ENCODE measurements at regions of chr19 and their contacts with region 1.

Region 1: DNA sequence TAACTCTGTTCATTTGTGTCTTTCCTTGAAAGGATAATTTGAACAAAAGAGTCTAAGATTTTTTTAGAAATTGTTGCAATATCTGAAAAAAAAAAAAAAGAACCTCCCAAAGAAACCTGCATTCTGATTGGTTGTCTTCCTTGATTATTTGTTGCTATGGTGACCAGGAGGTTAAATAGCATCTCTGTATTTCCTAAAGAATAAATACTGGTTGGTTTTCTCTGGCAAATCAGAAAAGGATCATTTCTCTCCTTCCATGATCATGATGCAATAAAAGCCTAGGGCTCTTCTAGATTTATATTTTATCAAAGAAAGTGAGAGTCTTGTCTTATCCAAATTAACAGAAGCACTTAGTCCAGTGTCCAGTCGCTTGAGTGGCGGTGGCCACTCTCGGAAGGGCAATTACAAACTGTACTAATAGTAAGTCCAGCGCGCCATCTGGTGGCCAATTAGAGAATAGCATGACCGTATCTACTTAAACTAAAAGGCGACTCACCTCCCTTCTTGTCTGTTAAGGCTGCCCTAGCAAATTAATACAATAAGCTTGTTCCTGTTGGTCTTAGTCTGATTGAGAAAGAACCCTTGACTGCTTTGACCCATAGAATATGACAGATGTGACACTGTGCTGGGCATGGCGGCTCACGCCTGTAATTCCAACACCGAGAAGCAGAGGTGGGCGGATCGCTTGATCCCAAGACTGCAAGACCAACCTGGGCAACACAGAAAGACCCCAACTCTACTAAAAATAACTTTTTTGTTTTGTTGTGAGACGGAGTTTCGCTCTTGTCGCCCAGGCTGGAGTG is 47.0 kb upstream of the PNMA8B start:
- DNase-seq: peak; percentile 76
- CTCF ChIP-seq: peak; percentile 78

Region 2: DNA sequence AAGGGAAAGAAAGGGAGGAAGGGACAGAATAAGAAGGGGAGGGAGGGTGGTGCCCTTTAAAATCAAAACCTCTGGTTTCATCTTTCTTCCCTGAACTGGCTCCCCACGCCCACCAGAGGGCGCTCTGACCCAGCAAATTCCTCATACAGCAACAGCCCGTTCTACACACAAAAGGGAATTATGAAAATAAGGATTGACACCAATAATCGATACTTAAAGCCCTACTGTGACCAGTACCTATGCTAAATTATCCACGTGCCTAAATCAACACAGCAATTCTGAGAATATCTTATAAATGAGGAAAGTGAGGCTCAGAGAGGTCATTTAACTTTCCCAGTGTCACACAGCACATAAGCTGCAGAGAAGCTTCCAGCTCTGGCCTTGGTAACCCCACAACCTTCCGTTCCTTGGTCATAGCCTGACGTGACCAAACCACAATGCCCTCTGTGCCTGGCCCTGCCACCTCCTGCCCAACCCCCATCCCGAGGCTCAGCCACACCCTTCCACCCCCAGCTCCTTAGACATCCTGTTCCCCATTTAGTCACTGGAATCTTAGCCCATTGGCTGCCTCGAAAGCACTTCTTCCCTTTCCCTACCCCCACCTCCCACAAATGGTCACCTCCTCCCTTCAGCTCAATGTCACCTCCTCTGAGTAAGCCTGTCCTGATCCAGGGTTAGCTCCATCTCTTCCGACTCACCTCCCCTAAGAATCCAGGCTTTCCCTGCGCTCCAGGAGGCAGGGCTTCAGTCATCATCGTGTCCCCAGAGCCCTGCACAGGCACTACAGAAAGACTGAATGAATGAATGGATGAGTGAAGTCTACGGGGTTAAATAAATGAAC is 12.8 kb before region 1 on chr19:
- CTCF ChIA-PET with region 1: interaction called, 135 read pairs
- POLR2A ChIA-PET with region 1: no interaction called
- DNase-seq: peak; percentile 82
- CTCF ChIP-seq: peak; percentile 87